ENCODE measurements at regions of chr19 and their contacts with region 1.

Region 1: GRCh38 chr19:19157808-19158207 is 12.3 kb downstream of the MEF2B start:
- DNase-seq: no peak
- H3K4me3 ChIP-seq: no peak overlapping the region
- H3K4me3 Mint-ChIP-seq: no peak overlapping the region
- H3K27ac Mint-ChIP-seq: no peak overlapping the region
- H3K4me1 ChIP-seq: no peaks in the 10 kb centered on the region
- H3K4me1 Mint-ChIP-seq: no peaks in the 10 kb centered on the region
- H3K27me3 ChIP-seq: no peaks in the 10 kb centered on the region
- H3K27me3 Mint-ChIP-seq: no peaks in the 10 kb centered on the region
- CTCF ChIP-seq: no peak

Region 2: GRCh38 chr19:18929313-18929712 is 228.5 kb before region 1 on chr19:
- CTCF ChIA-PET with region 1: no interaction called
- POLR2A ChIA-PET with region 1: interaction called, 11 read pairs
- intact Hi-C with region 1: no loop called
- DNase-seq: no peak
- H3K4me3 ChIP-seq: no peak overlapping the region
- H3K4me3 Mint-ChIP-seq: no peak overlapping the region
- H3K27ac Mint-ChIP-seq: no peak overlapping the region
- H3K4me1 ChIP-seq: no peaks in the 10 kb centered on the region
- H3K4me1 Mint-ChIP-seq: no peaks in the 10 kb centered on the region
- H3K27me3 ChIP-seq: no peaks in the 10 kb centered on the region
- H3K27me3 Mint-ChIP-seq: no peaks in the 10 kb centered on the region
- CTCF ChIP-seq: no peak

Region 3: GRCh38 chr19:19033426-19034203 is 124.2 kb before region 1 on chr19 and contains the starts of genes ARMC6 and SUGP2:
- CTCF ChIA-PET with region 1: no interaction called
- POLR2A ChIA-PET with region 1: no interaction called
- intact Hi-C with region 1: no loop called
- DNase-seq: peak; percentile 85 to 88
- H3K4me3 ChIP-seq: peak within 1 kb of the TSS; percentile 77
- H3K4me3 Mint-ChIP-seq: peak within 1 kb of the TSS; percentile 96
- H3K27ac Mint-ChIP-seq: peak within 1 kb of the TSS; percentile 85
- H3K4me1 ChIP-seq: no peaks in the 10 kb centered on the region; the same call in 1 of the 2 replicates
- H3K4me1 Mint-ChIP-seq: no peaks in the 10 kb centered on the region
- H3K27me3 ChIP-seq: no peaks in the 10 kb centered on the region
- H3K27me3 Mint-ChIP-seq: no peaks in the 10 kb centered on the region
- CTCF ChIP-seq: peak in 1 of 2 experiments; percentile 13
- total RNA-seq, gene ARMC6: 40.1 and 44.6 TPM in 2 replicates
- total RNA-seq, gene SUGP2: 74.1 and 75.6 TPM in 2 replicates

Region 4: DNA sequence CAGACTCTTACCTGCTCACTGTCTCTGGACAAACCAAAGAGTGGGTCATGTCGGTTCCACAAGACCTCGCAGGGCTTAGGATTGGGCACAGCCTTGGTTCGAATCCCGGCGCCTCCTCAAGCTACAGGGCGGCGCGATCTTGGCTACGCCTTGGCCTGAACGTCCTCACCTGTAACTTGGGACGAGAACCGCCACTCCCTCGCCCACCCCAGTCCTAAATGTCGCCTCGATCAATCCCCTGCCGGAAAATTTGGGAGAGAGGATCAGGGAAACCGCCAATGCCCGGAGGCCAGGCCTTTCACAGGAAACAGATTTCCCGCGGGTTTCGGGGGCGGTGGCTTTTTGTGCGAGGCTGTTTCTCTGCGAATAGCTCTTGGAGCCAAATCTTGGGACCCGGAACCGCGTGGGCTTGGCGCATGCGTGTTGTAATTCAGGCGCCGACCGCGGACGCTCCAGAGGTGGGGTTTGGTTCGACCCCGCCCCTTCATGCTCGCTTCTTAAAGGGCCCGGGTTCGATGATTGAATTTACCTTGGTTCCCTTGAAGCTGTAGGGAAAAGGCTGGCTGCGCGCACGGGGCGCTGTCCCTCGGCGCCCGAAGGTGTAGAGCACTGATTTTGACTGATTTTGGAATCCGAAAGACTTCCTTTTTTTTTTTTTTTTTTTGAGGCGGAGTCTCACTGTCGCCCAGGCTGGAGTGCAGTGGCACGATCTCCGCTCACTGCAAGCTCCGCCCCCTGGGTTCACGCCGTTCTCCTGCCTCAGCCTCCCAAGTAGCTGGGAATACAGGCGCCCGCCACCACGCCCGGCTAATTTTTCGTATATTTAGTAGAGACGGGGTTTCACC is 45.4 kb after region 1 on chr19 and contains the start of gene NR2C2AP:
- CTCF ChIA-PET with region 1: interaction called, 3 read pairs
- POLR2A ChIA-PET with region 1: interaction called, 12 read pairs
- intact Hi-C with region 1: no loop called
- DNase-seq: peak; percentile 90 to 92
- H3K4me3 ChIP-seq: peak within 1 kb of the TSS; percentile 67
- H3K4me3 Mint-ChIP-seq: peak within 1 kb of the TSS; percentile 83
- H3K27ac Mint-ChIP-seq: peak within 1 kb of the TSS; percentile 87
- H3K4me1 ChIP-seq: peaks cover 4% of the 10 kb centered on the region; the same call in 1 of the 2 replicates
- H3K4me1 Mint-ChIP-seq: no peaks in the 10 kb centered on the region
- H3K27me3 ChIP-seq: no peaks in the 10 kb centered on the region
- H3K27me3 Mint-ChIP-seq: peaks cover 3% of the 10 kb centered on the region
- CTCF ChIP-seq: no peak
- total RNA-seq, gene NR2C2AP: 25.2 and 25.7 TPM in 2 replicates

Region 5: DNA sequence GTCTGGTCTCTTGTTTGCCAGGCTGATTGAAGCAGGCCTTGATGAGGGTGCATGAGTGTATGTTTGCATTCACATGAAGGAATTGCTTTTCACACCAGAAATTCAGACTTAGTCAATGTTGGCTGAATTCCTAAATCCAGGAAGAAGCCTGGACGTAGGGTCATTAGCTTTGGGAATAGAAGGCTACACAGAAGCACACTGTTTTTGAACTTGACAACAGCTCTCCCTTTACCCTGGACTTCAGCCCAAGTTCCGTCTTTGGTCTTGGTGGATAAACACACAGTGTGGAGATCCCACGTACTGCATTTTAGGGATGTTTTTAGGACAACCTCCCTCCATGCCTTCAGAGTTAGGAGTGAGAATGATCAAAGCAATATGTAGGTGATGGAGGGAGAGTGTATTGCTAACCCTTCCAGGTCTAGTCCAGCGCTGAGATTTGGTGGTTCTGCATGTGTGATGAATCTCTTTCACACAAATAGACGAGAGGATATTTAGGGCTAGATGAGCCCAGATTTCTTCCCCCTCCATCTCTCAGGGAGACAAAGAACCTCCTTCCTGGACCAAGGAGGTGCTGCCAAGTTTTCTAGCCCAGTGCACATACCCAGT is 92.5 kb after region 1 on chr19:
- CTCF ChIA-PET with region 1: no interaction called
- POLR2A ChIA-PET with region 1: no interaction called
- intact Hi-C with region 1: no loop called
- DNase-seq: no peak
- H3K4me3 ChIP-seq: no peak overlapping the region
- H3K4me3 Mint-ChIP-seq: no peak overlapping the region
- H3K27ac Mint-ChIP-seq: no peak overlapping the region
- H3K4me1 ChIP-seq: no peaks in the 10 kb centered on the region
- H3K4me1 Mint-ChIP-seq: no peaks in the 10 kb centered on the region
- H3K27me3 ChIP-seq: no peaks in the 10 kb centered on the region
- H3K27me3 Mint-ChIP-seq: peaks cover 13% of the 10 kb centered on the region
- CTCF ChIP-seq: no peak

Region 6: DNA sequence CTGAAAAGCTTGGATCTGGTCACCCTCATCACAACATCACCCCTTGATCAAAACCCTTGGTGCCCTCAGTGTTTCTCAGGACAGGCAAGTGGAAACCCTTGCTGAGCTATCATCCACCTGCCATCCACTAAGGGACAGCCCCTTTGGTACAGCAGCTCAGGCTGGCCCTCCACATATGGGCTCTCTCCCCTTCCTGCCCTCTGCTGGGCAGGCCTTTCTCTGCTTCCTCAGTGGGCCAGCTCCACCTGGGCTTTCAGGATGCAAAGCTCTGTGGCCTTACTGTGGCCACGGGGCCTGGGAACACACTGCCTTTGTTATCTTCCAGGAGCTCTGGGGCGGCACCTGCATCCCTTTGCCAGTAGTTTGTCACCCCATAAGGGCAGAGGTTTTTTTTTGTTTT is 157.6 kb after region 1 on chr19:
- CTCF ChIA-PET with region 1: no interaction called
- POLR2A ChIA-PET with region 1: no interaction called
- intact Hi-C with region 1: no loop called
- DNase-seq: no peak
- H3K4me3 ChIP-seq: no peak overlapping the region
- H3K4me3 Mint-ChIP-seq: no peak overlapping the region
- H3K27ac Mint-ChIP-seq: no peak overlapping the region
- H3K4me1 ChIP-seq: no peaks in the 10 kb centered on the region
- H3K4me1 Mint-ChIP-seq: no peaks in the 10 kb centered on the region
- H3K27me3 ChIP-seq: no peaks in the 10 kb centered on the region
- H3K27me3 Mint-ChIP-seq: no peaks in the 10 kb centered on the region
- CTCF ChIP-seq: no peak

Measured in Caco-2 (cell line).